ENCODE measurements at regions of chr18 and their contacts with region 1.

Region 1: GRCh38 chr18:46148810-46149209 is 44.6 kb downstream of the HAUS1 start:
- DNase-seq: peak; percentile 73
- ATAC-seq: peak; percentile 63
- H3K4me3 Mint-ChIP-seq: no peak overlapping the region
- H3K27ac Mint-ChIP-seq: peak overlapping the region; percentile 65
- H3K4me1 Mint-ChIP-seq: peaks cover 30% of the 10 kb centered on the region
- H3K27me3 Mint-ChIP-seq: no peaks in the 10 kb centered on the region
- CTCF ChIP-seq: peak; percentile 76

Region 2: GRCh38 chr18:46166261-46166970 is 17.6 kb after region 1 on chr18:
- CTCF ChIA-PET with region 1: interaction called, 47 read pairs
- POLR2A ChIA-PET with region 1: interaction called, 3 read pairs
- intact Hi-C with region 1: no loop called
- DNase-seq: no peak
- ATAC-seq: no peak
- H3K4me3 Mint-ChIP-seq: no peak overlapping the region
- H3K27ac Mint-ChIP-seq: peak overlapping the region; percentile 13
- H3K4me1 Mint-ChIP-seq: peaks cover 32% of the 10 kb centered on the region
- H3K27me3 Mint-ChIP-seq: no peaks in the 10 kb centered on the region
- CTCF ChIP-seq: no peak